ENCODE measurements at regions of chr10 and their contacts with region 1.

Region 1: GRCh38 chr10:49407552-49408137 is 11.8 kb upstream of the DRGX start:
- DNase-seq: peak; percentile 25 to 72
- H3K4me3 ChIP-seq: no peak overlapping the region
- H3K27ac ChIP-seq: no peak overlapping the region
- H3K4me1 ChIP-seq: no peaks in the 10 kb centered on the region
- H3K27me3 ChIP-seq: no peaks in the 10 kb centered on the region
- CTCF ChIP-seq: peak; percentile 61 to 83 (median 67)

Region 2: GRCh38 chr10:48976196-48976595 is 431.4 kb before region 1 on chr10:
- intact Hi-C with region 1: loop called (anchors 10 kb)
- DNase-seq: no peak
- H3K4me3 ChIP-seq: no peak overlapping the region
- H3K27ac ChIP-seq: no peak overlapping the region
- H3K4me1 ChIP-seq: no peaks in the 10 kb centered on the region
- H3K27me3 ChIP-seq: no peaks in the 10 kb centered on the region
- CTCF ChIP-seq: peak in 1 of 3 experiments; percentile 41

Region 3: DNA sequence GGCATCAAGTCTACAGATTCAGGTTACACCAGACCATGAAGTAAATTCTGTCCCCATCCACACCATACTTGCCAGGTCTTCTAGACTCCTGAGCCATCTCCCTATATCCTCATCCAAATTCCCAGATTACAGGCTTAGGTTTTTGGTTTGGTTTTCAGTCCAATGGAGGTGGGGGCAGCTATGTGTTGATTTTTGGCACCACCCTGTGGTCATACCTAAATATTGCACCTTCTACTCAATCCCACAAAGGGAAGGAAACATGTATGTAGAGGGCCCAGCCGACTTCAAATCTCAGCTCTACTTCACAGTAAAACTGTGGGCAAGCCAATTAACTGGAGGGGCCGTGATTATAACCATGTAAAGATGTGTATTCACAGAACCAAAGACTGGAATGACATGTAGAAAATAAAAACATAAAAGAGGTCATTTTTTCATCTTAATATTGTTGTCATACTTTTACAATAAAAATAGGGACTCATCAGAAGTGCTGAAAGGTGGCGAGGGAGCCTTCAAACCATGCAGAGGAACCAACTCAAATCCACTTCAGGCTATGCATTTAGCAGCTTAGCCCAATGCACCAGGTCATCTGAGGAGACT is 111.4 kb after region 1 on chr10:
- intact Hi-C with region 1: loop called (anchors 5 kb)
- DNase-seq: no peak
- H3K4me3 ChIP-seq: no peak overlapping the region
- H3K27ac ChIP-seq: no peak overlapping the region
- H3K4me1 ChIP-seq: no peaks in the 10 kb centered on the region
- H3K27me3 ChIP-seq: no peaks in the 10 kb centered on the region
- CTCF ChIP-seq: peak; percentile 21 to 57 (median 33)

Measured in ascending aorta (tissue), 2 donors.